Naive thymus-derived CD4-positive, alpha-beta T cell (primary cell): ENCODE measurements at regions of chr10 and their contacts with region 1.

Region 1: GRCh38 chr10:102641880-102642735 is 2.2 kb upstream of the TRIM8 start:
- DNase-seq: peak; percentile 85 to 99 (median 93)
- ATAC-seq: peak; percentile 84
- H3K4me3 ChIP-seq: peak overlapping the region; percentile 85
- H3K4me3 Mint-ChIP-seq: peak overlapping the region; percentile 90 to 97 (median 93)
- H3K27ac ChIP-seq: peak overlapping the region; percentile 98
- H3K27ac Mint-ChIP-seq: peak overlapping the region; percentile 84 to 98 (median 95)
- H3K4me1 ChIP-seq: peaks cover 8 to 13% of the 10 kb centered on the region in 2 donors
- H3K4me1 Mint-ChIP-seq: peaks cover 13 to 29% (median 19%) of the 10 kb centered on the region in 7 donors
- H3K27me3 ChIP-seq: no peaks in the 10 kb centered on the region
- H3K27me3 Mint-ChIP-seq: peaks cover 0 to 6% (median 0%) of the 10 kb centered on the region in 5 donors

Region 2: GRCh38 chr10:102120142-102120990 is 521.7 kb before region 1 on chr10 and contains the start of gene LDB1:
- CTCF ChIA-PET with region 1: no interaction called
- POLR2A ChIA-PET with region 1: interaction called, 5 read pairs
- intact Hi-C with region 1: loop called (anchors 1 to 5 kb)
- DNase-seq: peak; percentile 51 to 74 (median 67)
- ATAC-seq: peak; percentile 70
- H3K4me3 ChIP-seq: peak within 1 kb of the TSS; percentile 90
- H3K4me3 Mint-ChIP-seq: peak within 1 kb of the TSS; percentile 88 to 98 (median 94)
- H3K27ac ChIP-seq: peak within 1 kb of the TSS; percentile 97
- H3K27ac Mint-ChIP-seq: peak within 1 kb of the TSS; percentile 80 to 98 (median 94)
- H3K4me1 ChIP-seq: peaks cover 40 to 43% of the 10 kb centered on the region in 2 donors
- H3K4me1 Mint-ChIP-seq: peaks cover 36 to 65% (median 57%) of the 10 kb centered on the region in 7 donors
- H3K27me3 ChIP-seq: no peaks in the 10 kb centered on the region
- H3K27me3 Mint-ChIP-seq: no peaks in the 10 kb centered on the region
- total RNA-seq, gene LDB1: 101 to 152 (median 115) TPM

Region 3: GRCh38 chr10:102394079-102394800 is 247.9 kb before region 1 on chr10:
- CTCF ChIA-PET with region 1: no interaction called
- POLR2A ChIA-PET with region 1: interaction called, 8 read pairs
- intact Hi-C with region 1: loop called (anchors 1 to 2 kb)
- DNase-seq: peak; percentile 96 to 100 (median 99)
- ATAC-seq: peak; percentile 83
- H3K4me3 ChIP-seq: peak overlapping the region; percentile 78
- H3K4me3 Mint-ChIP-seq: peak overlapping the region; percentile 92 to 99 (median 96)
- H3K27ac ChIP-seq: peak overlapping the region; percentile 100
- H3K27ac Mint-ChIP-seq: peak overlapping the region; percentile 94 to 100 (median 100)
- H3K4me1 ChIP-seq: peaks cover 16 to 24% of the 10 kb centered on the region in 2 donors
- H3K4me1 Mint-ChIP-seq: peaks cover 20 to 45% (median 39%) of the 10 kb centered on the region in 7 donors
- H3K27me3 ChIP-seq: no peaks in the 10 kb centered on the region
- H3K27me3 Mint-ChIP-seq: peaks cover 0 to 4% (median 0%) of the 10 kb centered on the region in 5 donors

Region 4: DNA sequence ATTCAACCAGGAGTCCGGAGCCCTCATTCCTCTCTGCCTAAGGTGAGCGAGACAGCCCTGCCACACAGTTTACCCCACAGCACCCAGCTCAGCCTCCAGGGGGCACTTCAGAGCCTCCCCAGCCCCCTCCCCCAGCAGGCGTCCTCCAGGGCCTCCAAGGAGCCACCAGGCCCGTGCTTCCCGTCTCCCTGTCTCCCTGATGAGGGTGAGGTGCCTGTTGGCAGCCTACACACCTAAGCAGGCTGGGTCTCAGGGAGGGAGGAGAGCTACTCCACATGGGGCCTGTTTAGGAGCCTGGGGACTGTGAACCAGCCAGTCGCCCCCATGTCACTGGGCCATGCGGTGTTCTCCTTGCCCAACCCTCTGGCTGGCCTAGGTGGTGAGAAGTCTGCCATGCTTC is 26.7 kb before region 1 on chr10:
- CTCF ChIA-PET with region 1: no interaction called
- POLR2A ChIA-PET with region 1: interaction called, 26 read pairs
- intact Hi-C with region 1: loop called in 1 of 2 experiments (anchors 1 kb)
- DNase-seq: no peak
- ATAC-seq: no peak
- H3K4me3 ChIP-seq: no peak overlapping the region
- H3K4me3 Mint-ChIP-seq: no peak overlapping the region
- H3K27ac ChIP-seq: no peak overlapping the region
- H3K27ac Mint-ChIP-seq: peak overlapping the region in 6 of 9 donors; percentile 29 to 84 (median 53)
- H3K4me1 ChIP-seq: peaks cover 0 to 35% of the 10 kb centered on the region in 2 donors
- H3K4me1 Mint-ChIP-seq: peaks cover 7 to 36% (median 32%) of the 10 kb centered on the region in 7 donors
- H3K27me3 ChIP-seq: no peaks in the 10 kb centered on the region
- H3K27me3 Mint-ChIP-seq: no peaks in the 10 kb centered on the region

Region 5: GRCh38 chr10:102743588-102744373 is 101.7 kb after region 1 on chr10 and contains the start of gene WBP1L:
- CTCF ChIA-PET with region 1: no interaction called
- POLR2A ChIA-PET with region 1: interaction called, 8 read pairs
- intact Hi-C with region 1: loop called (anchors 1 kb)
- DNase-seq: peak; percentile 77 to 98 (median 96)
- ATAC-seq: peak; percentile 98
- H3K4me3 ChIP-seq: peak within 1 kb of the TSS; percentile 85
- H3K4me3 Mint-ChIP-seq: peak within 1 kb of the TSS; percentile 80 to 97 (median 93)
- H3K27ac ChIP-seq: peak within 1 kb of the TSS; percentile 77
- H3K27ac Mint-ChIP-seq: peak within 1 kb of the TSS; percentile 57 to 96 (median 90)
- H3K4me1 ChIP-seq: peaks cover 17 to 25% of the 10 kb centered on the region in 2 donors
- H3K4me1 Mint-ChIP-seq: peaks cover 33 to 59% (median 48%) of the 10 kb centered on the region in 7 donors
- H3K27me3 ChIP-seq: no peaks in the 10 kb centered on the region
- H3K27me3 Mint-ChIP-seq: no peaks in the 10 kb centered on the region
- total RNA-seq, gene WBP1L: 20.5 to 37.9 (median 34.1) TPM

Region 6: DNA sequence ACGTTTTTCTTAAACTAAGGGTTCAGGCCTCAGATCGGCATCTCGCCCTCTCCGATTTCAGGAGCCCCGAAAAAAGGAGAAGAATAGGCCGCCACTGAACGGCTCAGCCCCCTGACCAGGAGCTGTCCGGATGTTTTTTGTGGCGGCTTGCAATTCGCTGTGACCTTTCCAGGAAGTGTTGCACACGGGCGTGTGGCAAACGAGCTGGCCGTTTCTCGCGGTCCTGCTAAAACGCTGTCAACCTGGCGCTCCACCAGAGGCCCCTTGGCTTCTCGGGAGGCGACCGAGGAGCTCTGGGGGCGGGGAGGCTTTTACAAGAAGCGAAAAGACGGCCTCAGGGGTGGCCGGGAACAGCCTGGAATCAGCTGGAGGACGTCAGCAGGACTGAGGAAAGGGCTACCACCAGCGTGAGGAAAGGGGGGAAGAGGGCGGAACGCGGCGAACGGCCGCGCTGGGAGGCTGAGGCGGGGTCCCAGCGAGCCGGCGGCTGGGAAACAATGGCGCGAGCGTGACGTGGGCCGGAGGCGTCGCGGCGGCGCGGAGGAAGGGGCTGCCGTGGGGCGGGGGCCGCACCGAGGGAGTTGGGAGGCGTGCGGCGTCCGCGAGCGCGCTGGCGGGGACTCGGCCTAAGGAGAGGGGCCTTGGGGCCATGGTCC is 550.5 kb after region 1 on chr10:
- CTCF ChIA-PET with region 1: no interaction called
- POLR2A ChIA-PET with region 1: interaction called, 3 read pairs
- intact Hi-C with region 1: loop called in 1 of 2 experiments (anchors 2 kb)
- DNase-seq: peak; percentile 36 to 76 (median 63)
- ATAC-seq: peak; percentile 60
- H3K4me3 ChIP-seq: peak overlapping the region; percentile 85
- H3K4me3 Mint-ChIP-seq: peak overlapping the region; percentile 91 to 100 (median 98)
- H3K27ac ChIP-seq: peak overlapping the region; percentile 97
- H3K27ac Mint-ChIP-seq: peak overlapping the region; percentile 81 to 100 (median 95)
- H3K4me1 ChIP-seq: peaks cover 6 to 21% of the 10 kb centered on the region in 2 donors
- H3K4me1 Mint-ChIP-seq: peaks cover 36 to 48% (median 44%) of the 10 kb centered on the region in 7 donors
- H3K27me3 ChIP-seq: no peaks in the 10 kb centered on the region
- H3K27me3 Mint-ChIP-seq: no peaks in the 10 kb centered on the region

Region 7: GRCh38 chr10:104268716-104269645 is 1626.9 kb after region 1 on chr10 and contains the start of gene GSTO2:
- CTCF ChIA-PET with region 1: no interaction called
- POLR2A ChIA-PET with region 1: no interaction called
- intact Hi-C with region 1: loop called in 1 of 2 experiments (anchors 10 kb)
- DNase-seq: peak; percentile 87 to 99 (median 98)
- ATAC-seq: peak; percentile 97
- H3K4me3 ChIP-seq: peak within 1 kb of the TSS; percentile 77
- H3K4me3 Mint-ChIP-seq: peak within 1 kb of the TSS; percentile 87 to 98 (median 94)
- H3K27ac ChIP-seq: peak within 1 kb of the TSS; percentile 93
- H3K27ac Mint-ChIP-seq: peak within 1 kb of the TSS; percentile 85 to 98 (median 96)
- H3K4me1 ChIP-seq: peaks cover 23 to 25% of the 10 kb centered on the region in 2 donors
- H3K4me1 Mint-ChIP-seq: peaks cover 25 to 55% (median 49%) of the 10 kb centered on the region in 7 donors
- H3K27me3 ChIP-seq: no peaks in the 10 kb centered on the region
- H3K27me3 Mint-ChIP-seq: no peaks in the 10 kb centered on the region
- total RNA-seq, gene GSTO2: 1.1 to 2.5 (median 1.4) TPM